ENCODE measurements at regions of chr2 and their contacts with region 1.

Region 1: GRCh38 chr2:71299507-71299906 is 32.1 kb upstream of the ZNF638 start:
- DNase-seq: no peak
- H3K4me3 ChIP-seq: no peak overlapping the region
- H3K27ac ChIP-seq: no peak overlapping the region
- H3K27me3 ChIP-seq: peaks cover 8% of the 10 kb centered on the region
- CTCF ChIP-seq: peak; percentile 78

Region 2: GRCh38 chr2:71282495-71282894 is 17.0 kb before region 1 on chr2:
- CTCF ChIA-PET with region 1: interaction called, 31 read pairs
- POLR2A ChIA-PET with region 1: no interaction called
- DNase-seq: no peak
- H3K4me3 ChIP-seq: no peak overlapping the region
- H3K27ac ChIP-seq: no peak overlapping the region
- H3K27me3 ChIP-seq: peaks cover 28% of the 10 kb centered on the region
- CTCF ChIP-seq: no peak

Region 3: GRCh38 chr2:71423817-71424420 is 124.4 kb after region 1 on chr2:
- CTCF ChIA-PET with region 1: interaction called, 14 read pairs
- POLR2A ChIA-PET with region 1: no interaction called
- DNase-seq: no peak
- H3K4me3 ChIP-seq: no peak overlapping the region
- H3K27ac ChIP-seq: no peak overlapping the region
- H3K27me3 ChIP-seq: no peaks in the 10 kb centered on the region
- CTCF ChIP-seq: no peak

Region 4: GRCh38 chr2:71460595-71461303 is 161.2 kb after region 1 on chr2:
- CTCF ChIA-PET with region 1: interaction called, 16 read pairs
- POLR2A ChIA-PET with region 1: no interaction called
- DNase-seq: no peak
- H3K4me3 ChIP-seq: no peak overlapping the region
- H3K27ac ChIP-seq: no peak overlapping the region
- H3K27me3 ChIP-seq: peaks cover 34% of the 10 kb centered on the region
- CTCF ChIP-seq: peak; percentile 65

Region 5: GRCh38 chr2:71516253-71516888 is 216.9 kb after region 1 on chr2:
- CTCF ChIA-PET with region 1: interaction called, 467 read pairs
- POLR2A ChIA-PET with region 1: no interaction called
- DNase-seq: no peak
- H3K4me3 ChIP-seq: no peak overlapping the region
- H3K27ac ChIP-seq: no peak overlapping the region
- H3K27me3 ChIP-seq: peaks cover 35% of the 10 kb centered on the region
- CTCF ChIP-seq: no peak

Measured in AG04450 (cell line).